ENCODE measurements at regions of chr22 and their contacts with region 1.

Region 1: DNA sequence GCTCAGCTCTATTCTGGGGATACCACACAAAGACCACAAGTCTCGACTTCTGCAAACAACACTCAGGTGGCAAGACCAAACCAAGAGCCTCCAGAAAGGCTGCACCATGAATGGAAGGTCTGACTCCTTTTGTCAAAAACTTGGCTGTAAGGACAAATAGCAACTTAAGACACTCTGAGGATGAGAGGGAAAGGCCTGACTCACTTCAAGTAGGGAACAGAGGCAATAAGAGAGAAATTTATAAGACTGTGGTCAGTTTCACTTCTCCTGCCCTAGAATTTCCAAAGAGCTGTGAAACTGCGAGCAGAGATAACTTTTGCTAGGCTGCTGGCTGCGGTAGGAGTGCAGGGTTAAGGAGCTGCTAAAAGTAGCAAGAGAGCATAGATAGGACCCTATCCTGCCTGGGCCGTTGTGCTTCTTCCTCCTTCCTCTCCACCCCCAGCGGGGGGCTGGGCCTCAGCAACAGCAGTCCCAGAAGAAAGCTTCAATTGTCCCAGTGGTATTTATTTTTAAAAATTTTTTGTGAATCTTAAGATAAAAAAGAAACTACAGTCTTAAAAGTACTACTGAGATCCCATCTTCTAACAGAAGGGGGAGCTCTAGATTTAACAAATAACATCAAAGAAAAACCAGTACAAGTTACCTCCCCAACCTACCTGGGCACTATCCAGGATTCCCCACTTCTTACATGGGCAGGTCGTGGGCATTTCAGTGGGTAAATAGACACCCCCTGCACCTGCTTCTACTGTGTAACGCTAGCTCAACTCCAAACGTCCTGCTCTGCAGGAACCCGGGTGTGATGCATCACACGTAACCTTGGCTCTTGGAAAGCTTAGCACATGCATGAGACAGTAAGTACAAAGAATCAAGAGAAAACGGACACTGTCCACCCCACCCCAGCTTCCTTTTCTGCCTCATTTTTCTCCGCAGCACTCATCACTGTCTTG is 66.4 kb downstream of the SGSM3 start:
- DNase-seq: peak; percentile 53
- CTCF ChIP-seq: peak; percentile 35

Region 2: GRCh38 chr22:40310081-40310767 is 126.6 kb before region 1 on chr22:
- CTCF ChIA-PET with region 1: no interaction called
- POLR2A ChIA-PET with region 1: no interaction called
- DNase-seq: no peak
- CTCF ChIP-seq: no peak

Region 3: DNA sequence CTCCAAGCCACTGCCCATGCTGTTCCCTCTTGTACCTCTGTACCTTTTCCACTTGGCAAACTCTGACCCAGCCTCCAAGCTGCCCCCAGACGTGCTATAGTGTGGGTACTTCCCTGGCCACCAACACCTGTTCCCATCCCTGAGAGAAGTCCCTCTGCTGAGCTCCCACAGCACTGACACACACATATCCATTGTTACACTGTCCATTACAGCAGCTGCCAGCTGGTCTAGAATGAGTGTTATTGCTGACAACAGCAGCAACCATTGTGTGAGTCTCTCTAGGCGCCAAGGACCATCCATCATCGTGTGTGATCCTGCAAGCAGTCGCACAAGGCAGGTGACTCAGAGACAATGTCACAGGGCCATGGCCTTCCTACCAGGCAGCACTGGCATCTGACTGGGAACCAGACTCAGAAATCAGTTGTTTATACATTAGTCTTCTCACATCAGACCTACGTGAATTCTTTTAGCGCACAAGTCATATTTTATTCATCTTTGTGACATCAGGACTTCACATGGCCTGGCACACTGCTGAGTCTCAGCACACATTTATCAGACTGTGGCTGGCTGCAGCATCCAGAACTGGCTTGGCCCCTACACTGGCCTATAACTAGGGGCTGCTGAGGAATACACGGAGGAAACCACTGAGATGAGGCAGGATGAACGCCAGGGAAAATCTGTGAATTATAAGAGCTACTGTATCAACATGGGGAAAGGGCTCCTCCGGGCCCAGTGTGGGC is 10.0 kb before region 1 on chr22:
- CTCF ChIA-PET with region 1: interaction called, 49 read pairs
- POLR2A ChIA-PET with region 1: no interaction called
- DNase-seq: no peak
- CTCF ChIP-seq: no peak

Region 4: GRCh38 chr22:40479126-40479800 is 42.5 kb after region 1 on chr22:
- CTCF ChIA-PET with region 1: interaction called, 95 read pairs
- POLR2A ChIA-PET with region 1: no interaction called
- DNase-seq: no peak
- CTCF ChIP-seq: no peak

Region 5: GRCh38 chr22:40519284-40519947 is 82.6 kb after region 1 on chr22:
- CTCF ChIA-PET with region 1: interaction called, 14 read pairs
- POLR2A ChIA-PET with region 1: no interaction called
- DNase-seq: peak; percentile 67
- CTCF ChIP-seq: no peak

Region 6: DNA sequence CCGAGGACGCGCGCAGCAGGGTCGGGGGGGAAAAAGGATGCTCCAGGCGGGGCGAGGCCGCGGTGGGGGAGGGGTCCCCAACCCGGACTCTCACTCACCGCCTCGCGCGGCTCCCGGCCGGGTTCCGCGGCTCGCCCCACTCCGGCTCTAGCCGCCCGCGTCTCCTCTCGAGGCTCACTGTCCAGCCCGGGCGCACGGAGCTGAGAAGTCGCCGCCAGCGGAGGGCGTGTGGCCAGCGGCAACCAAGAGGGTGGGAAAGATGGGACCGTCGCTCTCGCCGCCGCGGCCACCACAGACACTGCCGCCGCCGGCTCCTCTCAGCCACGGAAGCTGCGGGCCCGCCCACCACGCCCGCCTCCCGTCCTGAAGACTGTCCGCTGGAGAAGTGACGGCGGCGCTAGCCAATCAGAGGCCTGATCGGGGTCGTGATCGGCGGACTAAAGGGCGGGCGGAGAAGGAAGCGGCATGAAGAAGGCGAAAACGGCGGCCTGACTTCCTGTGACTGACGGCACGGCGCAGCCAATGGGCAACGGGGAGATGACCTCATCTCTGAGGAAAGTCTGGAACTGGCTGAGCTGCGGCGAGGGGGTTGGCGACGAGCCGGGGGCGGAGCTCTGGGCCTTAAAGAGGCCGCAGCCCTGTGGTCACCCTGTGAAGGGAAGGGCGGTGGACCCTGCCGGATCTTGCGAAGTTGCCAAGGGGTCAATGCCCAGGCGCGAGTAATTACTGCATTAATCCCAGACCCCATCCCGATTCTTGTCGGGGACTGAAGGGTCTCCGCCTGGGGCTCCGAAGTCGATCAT is 199.8 kb after region 1 on chr22 and contains the start of gene MRTFA:
- CTCF ChIA-PET with region 1: interaction called, 29 read pairs
- POLR2A ChIA-PET with region 1: no interaction called
- DNase-seq: peak; percentile 96
- CTCF ChIP-seq: no peak

Region 7: GRCh38 chr22:40898850-40899357 is 462.1 kb after region 1 on chr22:
- CTCF ChIA-PET with region 1: interaction called, 30 read pairs
- POLR2A ChIA-PET with region 1: no interaction called
- DNase-seq: peak; percentile 69
- CTCF ChIP-seq: peak; percentile 49